Mammary epithelial cell (primary cell): ENCODE measurements at regions of chr7 and their contacts with region 1.

Region 1: GRCh38 chr7:22667562-22668239 is 59.3 kb upstream of the IL6 start:
- DNase-seq: peak; percentile 92
- H3K4me3 ChIP-seq: no peak overlapping the region
- H3K27ac ChIP-seq: peak overlapping the region; percentile 55
- H3K4me1 ChIP-seq: peaks cover 45% of the 10 kb centered on the region
- H3K27me3 ChIP-seq: no peaks in the 10 kb centered on the region
- CTCF ChIP-seq: no peak

Region 2: DNA sequence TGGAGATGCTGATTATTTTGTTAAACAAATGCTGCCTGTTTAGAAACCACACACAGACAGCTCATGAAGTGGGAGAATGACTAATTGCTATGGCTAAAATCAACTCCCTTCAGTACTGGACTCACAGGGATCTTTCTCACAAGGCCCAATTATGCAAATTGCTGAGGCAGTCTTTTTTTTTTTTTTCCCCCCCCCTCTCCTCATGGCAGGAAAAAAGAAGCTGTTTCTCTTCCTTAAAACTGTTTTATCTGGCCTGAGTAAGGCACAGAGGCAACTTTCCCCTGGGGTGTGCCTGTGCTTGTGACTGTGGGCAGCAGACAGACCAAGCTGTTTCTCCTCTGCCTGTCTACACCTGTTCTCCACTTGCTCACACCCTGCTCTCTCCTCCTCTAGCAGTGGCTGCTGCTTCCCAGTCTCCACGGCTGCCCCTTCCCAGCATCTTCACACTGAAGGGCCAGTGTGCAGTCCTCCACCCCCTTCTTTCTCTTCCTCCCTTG is 102.3 kb before region 1 on chr7:
- CTCF ChIA-PET with region 1: no interaction called
- dilution Hi-C with region 1: no loop called
- in situ Hi-C with region 1: loop called in 1 of 2 experiments (anchors 5 kb)
- intact Hi-C with region 1: loop called (anchors 2 kb)
- DNase-seq: peak; percentile 92
- H3K4me3 ChIP-seq: no peak overlapping the region
- H3K27ac ChIP-seq: peak overlapping the region; percentile 81
- H3K4me1 ChIP-seq: peaks cover 61% of the 10 kb centered on the region
- H3K27me3 ChIP-seq: no peaks in the 10 kb centered on the region
- CTCF ChIP-seq: no peak

Region 3: GRCh38 chr7:22577396-22578001 is 90.2 kb before region 1 on chr7:
- CTCF ChIA-PET with region 1: no interaction called
- dilution Hi-C with region 1: no loop called
- in situ Hi-C with region 1: loop called in 1 of 2 experiments (anchors 5 kb)
- intact Hi-C with region 1: loop called (anchors 1 kb)
- DNase-seq: peak; percentile 87
- H3K4me3 ChIP-seq: no peak overlapping the region
- H3K27ac ChIP-seq: peak overlapping the region; percentile 73
- H3K4me1 ChIP-seq: peaks cover 35% of the 10 kb centered on the region
- H3K27me3 ChIP-seq: no peaks in the 10 kb centered on the region
- CTCF ChIP-seq: no peak

Region 4: GRCh38 chr7:22718200-22718711 is 50.6 kb after region 1 on chr7:
- CTCF ChIA-PET with region 1: no interaction called
- dilution Hi-C with region 1: loop called (anchors 10 kb)
- in situ Hi-C with region 1: no loop called
- intact Hi-C with region 1: loop called (anchors 2 kb)
- DNase-seq: peak; percentile 83
- H3K4me3 ChIP-seq: no peak overlapping the region
- H3K27ac ChIP-seq: no peak overlapping the region
- H3K4me1 ChIP-seq: peaks cover 17% of the 10 kb centered on the region
- H3K27me3 ChIP-seq: no peaks in the 10 kb centered on the region
- CTCF ChIP-seq: no peak

Region 5: DNA sequence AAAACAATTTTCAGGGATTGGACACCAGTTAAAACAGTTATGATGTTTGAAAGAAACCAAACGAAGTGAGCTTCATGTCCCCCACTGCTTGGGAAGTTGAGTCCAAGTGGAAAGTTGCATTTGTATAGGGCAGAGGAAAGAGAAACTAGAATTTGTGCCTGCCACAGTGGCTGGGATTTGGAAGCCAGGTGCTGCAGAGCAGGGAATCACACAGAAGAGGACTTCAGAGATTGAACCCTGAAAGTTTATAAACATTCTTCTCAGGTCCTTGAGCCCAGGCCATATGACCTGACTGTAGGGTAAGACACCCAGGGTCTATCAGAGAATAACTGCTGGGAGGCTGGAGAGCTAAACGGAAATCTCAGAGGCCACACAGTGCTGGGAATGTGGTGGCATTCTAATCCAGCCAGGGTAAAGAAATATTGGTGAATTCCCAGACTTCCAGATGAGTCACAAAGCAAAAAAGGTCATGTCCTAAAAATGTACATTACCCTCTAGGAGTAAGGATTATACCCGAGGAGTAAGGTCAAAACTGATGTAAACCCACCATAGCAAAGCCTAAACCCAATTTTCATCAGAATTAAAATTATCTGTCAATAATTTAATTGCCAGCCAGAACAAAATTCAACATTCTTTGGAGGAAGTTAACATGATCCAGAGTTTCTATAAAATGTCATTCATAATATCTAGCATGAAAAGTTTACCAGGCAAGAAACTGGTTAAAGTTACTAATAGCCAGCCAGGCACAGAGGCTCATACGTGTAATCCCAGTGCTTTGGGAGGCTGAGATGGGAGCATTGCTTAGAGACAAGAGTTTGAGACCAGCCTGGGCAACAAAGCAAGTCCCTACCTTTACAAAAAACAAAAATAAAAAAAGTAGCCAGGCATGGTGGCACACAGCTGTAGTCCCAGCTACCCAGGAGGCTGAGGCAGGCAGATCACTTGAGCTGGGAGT is 123.8 kb after region 1 on chr7:
- CTCF ChIA-PET with region 1: no interaction called
- dilution Hi-C with region 1: no loop called
- in situ Hi-C with region 1: no loop called
- intact Hi-C with region 1: no loop called
- DNase-seq: no peak
- H3K4me3 ChIP-seq: no peak overlapping the region
- H3K27ac ChIP-seq: no peak overlapping the region
- H3K4me1 ChIP-seq: no peaks in the 10 kb centered on the region
- H3K27me3 ChIP-seq: no peaks in the 10 kb centered on the region
- CTCF ChIP-seq: no peak